A549 (cell line): ENCODE measurements at regions of chr2 and their contacts with region 1.

Region 1: DNA sequence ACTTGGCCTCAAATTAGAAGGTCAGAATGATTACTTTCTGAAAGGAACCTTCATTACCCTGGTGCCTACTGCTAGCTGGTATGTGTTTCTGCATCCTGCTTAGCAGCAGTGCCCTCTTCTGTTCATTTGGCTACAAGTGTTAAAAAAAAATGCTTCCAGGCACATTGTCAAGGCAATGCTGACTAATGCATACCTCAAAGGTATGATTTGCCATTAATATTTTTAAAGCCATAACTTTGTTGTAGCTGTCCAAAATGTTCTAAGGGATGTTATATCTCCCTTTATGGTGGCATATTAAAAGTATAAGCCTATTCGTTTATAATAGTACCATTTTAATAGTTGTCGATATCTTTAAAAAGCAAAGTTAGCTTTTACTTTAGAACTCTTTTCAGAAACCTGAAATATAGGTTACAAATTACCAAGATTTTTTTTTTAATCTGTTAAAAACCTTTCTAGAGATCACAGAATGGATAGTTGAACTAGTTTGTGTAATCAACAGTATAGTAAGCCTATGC is 52.0 kb upstream of the FAM171B start:
- DNase-seq: peak; percentile 44 to 79
- ATAC-seq: peak; percentile 92 to 93
- H3K4me3 ChIP-seq: no peak overlapping the region
- H3K27ac ChIP-seq: peak overlapping the region in 1 of 2 experiments; percentile 55; a peak in 1 of 6 replicates
- H3K4me1 ChIP-seq: peaks cover 11% of the 10 kb centered on the region; the same call in 1 of the 3 replicates
- CTCF ChIP-seq: peak; percentile 93
- EP300 ChIP-seq: no peak
- POLR2A ChIP-seq: no peak
- RAD21 ChIP-seq: peak; percentile 95 to 96

Region 2: DNA sequence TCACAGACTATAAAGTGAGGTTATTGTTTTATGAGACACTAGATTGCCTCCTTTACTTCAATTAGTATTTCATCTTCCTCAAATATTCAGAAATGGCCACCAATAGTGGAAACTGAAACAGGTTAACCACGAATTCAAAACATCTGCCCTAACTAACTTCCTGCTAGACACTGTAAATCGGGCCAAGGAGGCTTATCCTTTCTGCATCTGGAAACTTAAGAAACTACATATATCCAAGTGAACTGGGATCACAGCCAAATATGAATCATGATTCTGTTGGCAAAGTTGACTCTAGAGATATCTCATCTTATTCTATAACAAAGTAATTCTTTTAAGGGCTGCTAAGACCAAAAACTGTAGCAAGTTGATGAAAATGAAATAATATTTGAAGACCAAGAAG is 292.4 kb before region 1 on chr2:
- CTCF ChIA-PET with region 1: no interaction called
- POLR2A ChIA-PET with region 1: no interaction called
- DNase-seq: peak; percentile 0 to 44
- ATAC-seq: peak in 1 of 2 experiments; percentile 45; a peak in 2 of 6 replicates
- H3K4me3 ChIP-seq: no peak overlapping the region
- H3K27ac ChIP-seq: no peak overlapping the region
- H3K4me1 ChIP-seq: peaks cover 22% of the 10 kb centered on the region
- CTCF ChIP-seq: no peak
- EP300 ChIP-seq: no peak
- POLR2A ChIP-seq: no peak
- RAD21 ChIP-seq: no peak

Region 3: GRCh38 chr2:186493564-186494085 is 148.2 kb before region 1 on chr2:
- CTCF ChIA-PET with region 1: interaction called, 16 read pairs
- POLR2A ChIA-PET with region 1: interaction called, 4 read pairs
- DNase-seq: no peak
- ATAC-seq: no peak
- H3K4me3 ChIP-seq: no peak overlapping the region
- H3K27ac ChIP-seq: no peak overlapping the region
- H3K4me1 ChIP-seq: peaks cover 13% of the 10 kb centered on the region; the same call in 2 of the 3 replicates
- CTCF ChIP-seq: no peak
- EP300 ChIP-seq: no peak
- POLR2A ChIP-seq: no peak
- RAD21 ChIP-seq: no peak

Region 4: DNA sequence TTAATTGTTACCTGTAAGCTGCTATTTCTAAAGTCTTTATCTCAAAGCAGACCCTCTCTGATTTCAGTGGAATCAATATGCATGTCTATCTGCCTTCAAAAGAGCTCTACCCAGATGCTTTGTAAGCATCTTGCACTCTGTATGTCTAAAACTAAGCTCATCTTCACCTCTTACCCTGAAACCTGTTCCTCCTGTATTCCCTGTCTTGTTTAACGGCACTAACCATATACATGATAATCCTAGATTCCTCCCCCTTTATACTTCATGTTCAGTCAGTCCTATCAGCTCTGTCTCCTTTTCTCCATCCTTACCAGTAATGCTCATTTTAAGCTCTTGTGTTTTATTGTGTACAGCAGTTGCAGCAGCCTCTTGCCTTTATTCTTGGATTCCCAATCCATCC is 143.0 kb before region 1 on chr2:
- CTCF ChIA-PET with region 1: interaction called, 85 read pairs
- POLR2A ChIA-PET with region 1: interaction called, 4 read pairs
- DNase-seq: no peak
- ATAC-seq: no peak
- H3K4me3 ChIP-seq: no peak overlapping the region
- H3K27ac ChIP-seq: no peak overlapping the region
- H3K4me1 ChIP-seq: 0 out of 3 replicates have a peak, but pooled peaks cover 8% of the 10 kb centered on the region
- CTCF ChIP-seq: no peak
- EP300 ChIP-seq: no peak
- POLR2A ChIP-seq: no peak
- RAD21 ChIP-seq: no peak

Region 5: DNA sequence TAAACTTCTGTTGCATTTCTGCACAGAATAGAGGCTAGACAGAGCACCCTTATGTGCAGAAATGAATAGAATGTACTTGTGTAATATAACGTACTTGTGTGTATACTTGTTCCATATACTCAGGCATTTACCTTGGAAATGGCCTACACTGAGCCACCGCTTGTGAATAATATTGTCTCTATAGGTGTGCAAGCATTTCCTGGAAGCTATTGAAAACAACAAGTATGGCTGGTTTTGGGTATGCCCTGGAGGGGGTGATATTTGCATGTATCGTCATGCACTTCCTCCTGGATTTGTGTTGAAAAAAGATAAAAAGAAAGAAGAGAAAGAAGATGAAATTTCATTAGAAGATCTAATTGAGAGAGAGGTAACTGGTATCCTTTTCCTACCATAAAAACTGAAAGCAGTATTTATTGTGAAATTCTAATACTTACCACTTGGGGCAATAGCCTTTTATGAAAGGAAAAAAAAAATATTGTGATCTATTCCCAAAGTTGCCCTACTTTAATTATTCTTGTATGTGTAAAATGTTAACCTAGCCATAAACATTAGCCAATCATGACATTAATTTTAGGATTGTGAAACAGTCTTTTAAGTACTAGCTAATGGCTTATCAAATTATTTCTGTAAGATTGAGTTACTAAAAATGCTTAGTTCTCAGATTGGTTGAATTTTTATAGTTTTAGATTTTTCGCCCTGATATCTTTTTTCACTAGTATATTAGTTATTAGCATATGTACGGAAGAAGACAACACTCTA is 137.8 kb before region 1 on chr2:
- CTCF ChIA-PET with region 1: interaction called, 85 read pairs
- POLR2A ChIA-PET with region 1: interaction called, 3 read pairs
- DNase-seq: peak in 1 of 2 experiments; percentile 37
- ATAC-seq: peak; percentile 80 to 82
- H3K4me3 ChIP-seq: no peak overlapping the region
- H3K27ac ChIP-seq: no peak overlapping the region
- H3K4me1 ChIP-seq: 0 out of 3 replicates have a peak, but pooled peaks cover 4% of the 10 kb centered on the region
- CTCF ChIP-seq: peak; percentile 81
- EP300 ChIP-seq: no peak
- POLR2A ChIP-seq: no peak
- RAD21 ChIP-seq: peak; percentile 83 to 88

Region 6: DNA sequence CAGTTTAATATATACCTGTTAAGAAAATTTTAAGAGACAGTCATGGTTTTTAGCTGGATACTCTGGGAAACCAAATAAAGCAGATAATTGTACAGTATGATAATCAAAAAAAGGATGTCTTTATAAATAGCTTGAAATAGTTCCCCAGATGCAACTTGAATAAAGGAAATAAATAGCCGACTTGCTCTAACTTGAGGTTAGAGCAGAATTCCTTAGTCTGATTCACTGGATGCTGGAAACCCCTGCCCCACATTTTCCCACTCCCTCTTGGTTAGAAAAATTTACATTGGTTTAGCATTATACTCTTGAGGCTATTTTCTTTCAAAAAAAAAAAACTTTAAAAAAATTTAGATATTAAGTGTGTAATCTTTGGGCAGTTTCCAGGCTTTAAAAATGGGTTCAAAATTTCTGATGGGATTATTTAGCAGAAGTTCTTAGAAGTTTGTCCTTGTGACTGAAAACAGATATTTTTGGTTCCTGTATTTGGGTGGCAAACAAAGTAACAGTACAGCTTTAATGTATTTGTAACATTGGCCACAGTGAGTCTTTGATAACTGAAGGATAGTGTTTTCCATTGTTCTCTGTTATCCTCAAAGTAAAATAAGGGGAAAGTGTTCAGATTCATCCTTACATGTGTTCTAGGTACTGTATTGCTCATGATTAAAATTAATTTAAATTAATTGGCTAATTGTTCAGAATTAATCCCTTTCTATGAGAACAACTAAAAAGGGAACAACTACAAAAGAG is 12.4 kb before region 1 on chr2:
- CTCF ChIA-PET with region 1: interaction called, 12 read pairs
- POLR2A ChIA-PET with region 1: no interaction called
- DNase-seq: no peak
- ATAC-seq: no peak
- H3K4me3 ChIP-seq: no peak overlapping the region
- H3K27ac ChIP-seq: no peak overlapping the region
- H3K4me1 ChIP-seq: no peaks in the 10 kb centered on the region
- CTCF ChIP-seq: no peak
- EP300 ChIP-seq: no peak
- POLR2A ChIP-seq: no peak
- RAD21 ChIP-seq: no peak

Region 7: GRCh38 chr2:186664385-186665043 is 22.6 kb after region 1 on chr2:
- CTCF ChIA-PET with region 1: interaction called, 15 read pairs
- POLR2A ChIA-PET with region 1: no interaction called
- DNase-seq: no peak
- ATAC-seq: no peak
- H3K4me3 ChIP-seq: no peak overlapping the region
- H3K27ac ChIP-seq: no peak overlapping the region
- H3K4me1 ChIP-seq: no peaks in the 10 kb centered on the region
- CTCF ChIP-seq: no peak
- EP300 ChIP-seq: no peak
- POLR2A ChIP-seq: no peak
- RAD21 ChIP-seq: no peak

Region 8: GRCh38 chr2:186737732-186738508 is 96.1 kb after region 1 on chr2:
- CTCF ChIA-PET with region 1: no interaction called
- POLR2A ChIA-PET with region 1: no interaction called
- DNase-seq: no peak
- ATAC-seq: no peak
- H3K4me3 ChIP-seq: no peak overlapping the region
- H3K27ac ChIP-seq: no peak overlapping the region
- H3K4me1 ChIP-seq: no peaks in the 10 kb centered on the region
- CTCF ChIP-seq: no peak
- EP300 ChIP-seq: no peak
- POLR2A ChIP-seq: no peak
- RAD21 ChIP-seq: no peak